MCF 10A (cell line): ENCODE measurements at regions of chr1 and their contacts with region 1.

Region 1: GRCh38 chr1:32981003-32981901 is 16.6 kb upstream of the RNF19B start:
- DNase-seq: peak; percentile 95
- H3K4me3 Mint-ChIP-seq: peak overlapping the region; percentile 6
- H3K27ac Mint-ChIP-seq: peak overlapping the region; percentile 95
- H3K4me1 Mint-ChIP-seq: peaks cover 14% of the 10 kb centered on the region
- H3K27me3 Mint-ChIP-seq: no peaks in the 10 kb centered on the region
- CTCF ChIP-seq: no peak

Region 2: DNA sequence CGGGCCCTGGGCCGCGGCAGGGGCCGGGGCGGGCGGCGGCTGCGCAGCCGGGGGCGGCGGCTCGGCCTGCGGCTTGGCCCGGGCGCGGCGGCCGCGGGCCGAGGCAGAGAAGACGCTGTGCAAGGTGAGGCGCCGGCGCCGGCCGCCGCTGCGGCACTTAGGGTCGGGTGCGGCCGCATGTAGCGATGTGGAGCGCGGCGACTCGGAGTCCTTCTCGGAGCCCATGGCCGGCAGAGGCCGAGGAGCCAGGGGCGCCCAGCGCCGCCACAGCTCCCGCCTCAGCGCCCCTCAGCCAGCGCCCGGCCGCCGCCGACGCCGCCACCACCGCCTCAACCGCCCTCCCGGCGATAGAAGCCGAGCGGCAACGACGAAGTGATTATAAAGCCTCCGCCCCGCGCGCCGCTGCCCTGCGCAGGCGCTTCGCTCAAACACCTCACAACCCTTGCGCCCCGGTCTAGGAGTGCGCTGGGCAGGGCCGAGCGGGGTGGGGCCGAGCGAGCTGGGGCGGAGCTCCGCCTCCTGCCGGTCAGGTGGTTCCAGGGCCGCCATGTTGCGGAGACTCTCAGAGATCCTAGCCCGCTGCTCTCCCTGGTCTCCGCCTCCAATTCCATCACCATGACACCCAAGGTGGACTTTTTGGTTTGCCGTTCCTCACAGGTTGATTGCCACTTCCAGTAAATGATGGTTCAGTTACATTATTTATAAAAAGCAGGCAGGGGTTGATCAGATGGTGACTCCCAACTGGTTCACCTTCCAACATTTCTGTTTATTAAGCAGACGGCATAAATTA is 16.6 kb before region 1 on chr1 and contains the start of gene RNF19B:
- CTCF ChIA-PET with region 1: interaction called, 5 read pairs
- POLR2A ChIA-PET with region 1: interaction called, 255 read pairs
- intact Hi-C with region 1: no loop called
- DNase-seq: peak; percentile 95
- H3K4me3 Mint-ChIP-seq: peak within 1 kb of the TSS; percentile 84
- H3K27ac Mint-ChIP-seq: peak within 1 kb of the TSS; percentile 69
- H3K4me1 Mint-ChIP-seq: peaks cover 29% of the 10 kb centered on the region
- H3K27me3 Mint-ChIP-seq: no peaks in the 10 kb centered on the region
- CTCF ChIP-seq: no peak
- total RNA-seq, gene RNF19B: 38.0 and 41.3 TPM in 2 replicates